ENCODE measurements at regions of chr15 and their contacts with region 1.

Region 1: GRCh38 chr15:78241007-78241406 is 6.6 kb upstream of the ACSBG1 start:
- DNase-seq: no peak
- H3K4me3 ChIP-seq: no peak overlapping the region
- H3K27ac ChIP-seq: no peak overlapping the region
- H3K4me1 ChIP-seq: no peaks in the 10 kb centered on the region
- H3K27me3 ChIP-seq: no peaks in the 10 kb centered on the region
- CTCF ChIP-seq: peak; percentile 73 to 98 (median 83)
- POLR2A ChIP-seq: no peak

Region 2: DNA sequence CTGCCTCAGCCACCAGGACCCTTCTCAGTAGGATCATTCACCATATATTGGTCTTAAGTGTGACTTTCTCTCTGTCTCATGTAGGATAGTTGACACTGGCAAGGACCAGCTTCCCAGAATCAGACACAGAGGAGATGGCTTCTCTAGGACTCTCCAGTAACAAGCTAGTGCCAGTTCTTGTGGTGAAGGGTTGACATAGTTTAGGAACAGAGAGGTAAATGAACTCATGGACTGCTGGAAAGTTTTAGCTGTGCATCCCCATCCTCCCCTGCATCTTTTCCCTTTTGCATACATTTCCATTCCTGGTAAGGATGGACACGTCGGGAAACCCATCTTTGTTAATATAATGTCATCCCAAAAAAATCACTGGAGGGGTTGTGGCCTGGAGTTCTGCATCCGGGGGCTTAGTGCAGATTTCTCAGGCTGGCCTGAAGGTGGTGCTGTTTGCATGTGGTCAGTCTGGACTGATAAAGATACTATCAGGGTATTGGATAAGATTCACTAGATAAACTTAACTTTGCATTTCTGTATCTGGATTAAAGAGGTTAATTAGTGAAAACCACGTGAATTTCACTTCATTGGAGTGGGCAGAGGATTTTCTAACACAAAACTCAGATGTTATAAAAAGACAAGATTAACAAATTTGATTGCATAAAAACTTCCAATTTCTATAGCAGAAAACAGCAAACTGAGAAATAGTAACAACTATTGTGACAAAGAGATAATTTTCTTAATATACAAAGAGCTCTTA is 274.3 kb before region 1 on chr15:
- intact Hi-C with region 1: loop called (anchors 5 kb)
- DNase-seq: no peak
- H3K4me3 ChIP-seq: no peak overlapping the region
- H3K27ac ChIP-seq: no peak overlapping the region
- H3K4me1 ChIP-seq: no peaks in the 10 kb centered on the region
- H3K27me3 ChIP-seq: no peaks in the 10 kb centered on the region
- CTCF ChIP-seq: peak; percentile 61 to 85 (median 66)
- POLR2A ChIP-seq: no peak